HCT116 (cell line): ENCODE measurements at regions of chr7 and their contacts with region 1.

Region 1: DNA sequence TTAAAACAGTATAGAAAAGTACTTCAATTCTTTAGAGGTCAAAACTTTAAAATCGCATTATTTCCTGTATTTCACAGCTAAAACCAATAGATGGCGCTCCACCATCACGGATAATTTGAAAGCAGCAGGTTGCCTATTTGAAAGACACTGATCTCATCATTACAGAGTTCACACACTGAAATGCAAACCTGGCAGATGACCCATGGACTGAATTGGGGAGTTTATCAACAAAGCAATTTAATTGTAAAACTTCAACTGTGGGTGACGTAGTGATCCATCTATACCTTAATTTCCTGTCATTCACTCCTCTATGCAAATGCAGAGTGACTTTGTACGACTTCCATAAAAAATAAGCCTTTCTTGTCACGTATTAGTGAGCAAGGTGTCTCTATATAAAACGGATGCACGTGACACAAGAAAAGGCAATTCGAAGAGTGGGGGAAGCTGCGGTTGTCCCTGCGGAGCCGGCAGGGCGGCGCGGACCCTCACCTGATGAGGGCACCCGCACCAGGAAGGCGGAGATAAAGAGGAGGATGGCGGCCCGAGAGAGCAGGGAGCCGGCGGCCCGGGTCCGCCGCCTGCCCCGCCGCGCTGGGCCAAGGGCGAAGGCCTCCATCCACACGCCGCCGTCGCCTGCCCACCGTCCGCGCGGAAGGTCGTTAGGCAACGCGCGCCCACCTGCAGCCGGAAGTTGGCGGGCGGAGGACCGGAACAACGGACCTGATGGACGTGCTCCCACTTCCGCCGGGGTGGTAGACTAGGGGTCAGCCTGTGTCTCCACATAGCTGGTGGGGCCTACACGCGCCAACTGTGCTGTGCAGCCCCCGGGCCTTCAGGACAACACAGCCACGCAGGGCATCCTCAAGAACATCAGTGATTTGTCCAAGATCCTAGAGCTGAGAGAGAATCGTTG is at the start of gene ZPBP:
- DNase-seq: peak; percentile 7
- ATAC-seq: peak; percentile 42
- H3K4me3 ChIP-seq: no peak within 1 kb of the TSS
- H3K27ac ChIP-seq: no peak within 1 kb of the TSS
- H3K4me1 ChIP-seq: no peaks in the 10 kb centered on the region
- H3K27me3 ChIP-seq: no peaks in the 10 kb centered on the region
- CTCF ChIP-seq: peak; percentile 45 to 83 (median 62); a peak in 5 of 6 replicates
- POLR2A ChIP-seq: no peak
- RAD21 ChIP-seq: peak; percentile 80
- total RNA-seq, gene ZPBP: not detected

Region 2: DNA sequence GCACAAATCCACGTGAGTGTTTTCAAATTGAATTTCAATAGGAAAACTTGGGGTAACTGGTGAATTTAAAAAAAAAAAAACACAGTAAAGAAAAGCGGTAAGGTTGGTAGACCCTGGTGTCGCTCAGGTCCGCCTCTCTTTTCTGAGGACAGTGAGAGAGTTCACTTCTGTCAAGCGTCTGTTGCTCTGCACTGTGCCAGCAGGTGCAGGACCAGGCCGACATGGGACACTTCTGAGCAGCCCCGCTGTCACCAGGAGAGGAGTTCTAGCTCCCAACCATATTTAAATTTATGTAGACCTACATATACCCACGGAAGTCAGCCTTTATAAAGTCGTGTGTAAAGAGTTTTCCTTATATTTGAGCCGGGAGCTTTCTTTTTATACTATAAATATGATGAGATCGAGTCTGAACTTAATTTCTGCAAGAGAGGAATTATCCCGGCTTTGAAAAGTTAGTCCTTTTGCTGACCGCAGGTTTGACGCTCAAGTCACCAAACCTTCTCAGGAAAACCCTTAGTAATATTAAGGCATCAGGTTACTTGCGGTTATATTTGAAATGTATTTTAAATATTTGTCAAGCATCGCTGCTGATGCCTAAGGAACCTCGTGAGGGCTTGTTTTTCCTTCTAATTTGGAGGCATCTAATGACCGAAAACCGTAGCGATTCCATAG is 212.2 kb after region 1 on chr7:
- CTCF ChIA-PET with region 1: no interaction called
- POLR2A ChIA-PET with region 1: no interaction called
- RAD21 ChIA-PET with region 1: no interaction called
- intact Hi-C with region 1: no loop called
- DNase-seq: no peak
- ATAC-seq: no peak
- H3K4me3 ChIP-seq: no peak overlapping the region
- H3K27ac ChIP-seq: no peak overlapping the region
- H3K4me1 ChIP-seq: no peaks in the 10 kb centered on the region
- H3K27me3 ChIP-seq: 0 out of 2 replicates have a peak, but pooled peaks cover 8% of the 10 kb centered on the region
- CTCF ChIP-seq: no peak
- POLR2A ChIP-seq: no peak
- RAD21 ChIP-seq: no peak

Region 3: DNA sequence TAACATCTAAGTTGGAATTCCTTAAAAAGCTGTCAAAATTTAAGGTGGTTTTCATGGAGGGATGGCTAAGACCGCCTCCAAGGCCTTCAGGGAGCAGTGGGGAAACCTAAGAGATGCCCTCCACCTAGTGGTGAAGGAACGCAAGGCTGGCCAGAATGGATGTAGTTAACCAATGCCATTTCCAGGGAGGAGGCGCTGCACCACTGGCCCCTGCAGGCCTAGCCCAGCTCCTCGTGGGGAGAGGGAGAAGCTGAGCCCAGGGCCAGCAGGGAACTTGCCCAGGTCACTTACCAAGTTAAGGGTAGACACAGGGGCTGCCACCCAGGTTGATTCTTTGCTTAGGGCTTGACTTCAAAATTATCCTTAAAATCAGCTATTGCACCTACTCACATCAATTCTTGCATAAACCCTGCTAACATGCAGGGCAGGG is 325.3 kb after region 1 on chr7:
- CTCF ChIA-PET with region 1: interaction called, 17 read pairs
- POLR2A ChIA-PET with region 1: no interaction called
- RAD21 ChIA-PET with region 1: no interaction called
- intact Hi-C with region 1: loop called (anchors 2 kb)
- DNase-seq: peak; percentile 76
- ATAC-seq: peak; percentile 100
- H3K4me3 ChIP-seq: no peak overlapping the region
- H3K27ac ChIP-seq: no peak overlapping the region
- H3K4me1 ChIP-seq: no peaks in the 10 kb centered on the region
- H3K27me3 ChIP-seq: no peaks in the 10 kb centered on the region
- CTCF ChIP-seq: peak; percentile 90 to 98 (median 97)
- POLR2A ChIP-seq: no peak
- RAD21 ChIP-seq: peak; percentile 88

Region 4: DNA sequence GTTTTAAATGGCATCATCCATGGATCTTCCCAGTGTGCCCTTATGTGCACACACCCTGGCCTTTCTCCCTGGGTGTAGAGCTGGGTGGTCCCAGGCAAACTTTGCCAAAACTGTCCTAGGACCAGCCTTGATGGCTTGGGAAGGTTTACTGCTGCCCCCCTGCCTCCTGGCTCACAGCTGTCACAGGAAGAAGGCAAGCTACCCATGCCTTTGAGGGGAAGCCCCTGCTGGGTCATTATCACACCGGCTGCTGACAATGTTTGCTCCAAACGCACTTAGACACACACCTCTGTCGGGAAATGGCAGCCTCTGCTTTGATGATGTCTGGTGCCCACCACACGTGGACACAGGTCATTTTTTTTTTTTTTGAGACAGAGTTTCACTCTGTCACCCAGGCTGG is 382.5 kb after region 1 on chr7:
- CTCF ChIA-PET with region 1: no interaction called
- POLR2A ChIA-PET with region 1: no interaction called
- RAD21 ChIA-PET with region 1: no interaction called
- intact Hi-C with region 1: no loop called
- DNase-seq: no peak
- ATAC-seq: no peak
- H3K4me3 ChIP-seq: no peak overlapping the region
- H3K27ac ChIP-seq: no peak overlapping the region
- H3K4me1 ChIP-seq: no peaks in the 10 kb centered on the region
- H3K27me3 ChIP-seq: no peaks in the 10 kb centered on the region
- CTCF ChIP-seq: no peak
- POLR2A ChIP-seq: no peak
- RAD21 ChIP-seq: no peak

Region 5: GRCh38 chr7:50679218-50680007 is 586.6 kb after region 1 on chr7:
- CTCF ChIA-PET with region 1: no interaction called
- POLR2A ChIA-PET with region 1: no interaction called
- RAD21 ChIA-PET with region 1: no interaction called
- intact Hi-C with region 1: loop called (anchors 1 kb)
- DNase-seq: peak; percentile 18
- ATAC-seq: peak; percentile 82
- H3K4me3 ChIP-seq: no peak overlapping the region
- H3K27ac ChIP-seq: no peak overlapping the region
- H3K4me1 ChIP-seq: no peaks in the 10 kb centered on the region
- H3K27me3 ChIP-seq: no peaks in the 10 kb centered on the region
- CTCF ChIP-seq: peak in 2 of 3 experiments; percentile 39 to 42; a peak in 2 of 6 replicates
- POLR2A ChIP-seq: no peak
- RAD21 ChIP-seq: peak; percentile 75

Region 6: GRCh38 chr7:51366930-51367613 is 1274.2 kb after region 1 on chr7:
- CTCF ChIA-PET with region 1: interaction called, 3 read pairs
- POLR2A ChIA-PET with region 1: no interaction called
- RAD21 ChIA-PET with region 1: no interaction called
- intact Hi-C with region 1: loop called (anchors 5 kb)
- DNase-seq: no peak
- ATAC-seq: peak; percentile 94
- H3K4me3 ChIP-seq: no peak overlapping the region
- H3K27ac ChIP-seq: no peak overlapping the region
- H3K4me1 ChIP-seq: peaks cover 0 to 8% of the 10 kb centered on the region in 2 experiments; a peak in 1 of 4 replicates
- H3K27me3 ChIP-seq: no peaks in the 10 kb centered on the region
- CTCF ChIP-seq: peak; percentile 65 to 85 (median 76); a peak in 5 of 6 replicates
- POLR2A ChIP-seq: no peak
- RAD21 ChIP-seq: peak; percentile 79